Activated T-helper 1 cell treated with anti-CD3 and anti-CD28 coated beads, Interleukin-12 subunit alpha, Interleukin-12 subunit beta, Interleukin-2, Interleukin-4 antibody, amounts not matched to agents 30 ng/mL and 10 ng/mL and 1 ng/mL, durations not matched to agents 14 hours and 24 hours and 36 hours (primary cell): ENCODE measurements at regions of chr9 and their contacts with region 1.

Region 1: GRCh38 chr9:131692612-131693562 is 47.0 kb downstream of the RAPGEF1 start:
- DNase-seq: no peak
- H3K4me3 Mint-ChIP-seq: no peak overlapping the region
- H3K27ac Mint-ChIP-seq: no peak overlapping the region
- H3K4me1 Mint-ChIP-seq: peaks cover 82% of the 10 kb centered on the region
- H3K27me3 Mint-ChIP-seq: no peaks in the 10 kb centered on the region

Region 2: GRCh38 chr9:131704141-131704983 is 11.5 kb after region 1 on chr9:
- intact Hi-C with region 1: loop called (anchors 2 kb)
- DNase-seq: no peak
- H3K4me3 Mint-ChIP-seq: peak overlapping the region; percentile 65
- H3K27ac Mint-ChIP-seq: peak overlapping the region; percentile 91
- H3K4me1 Mint-ChIP-seq: peaks cover 89% of the 10 kb centered on the region
- H3K27me3 Mint-ChIP-seq: no peaks in the 10 kb centered on the region

Region 3: DNA sequence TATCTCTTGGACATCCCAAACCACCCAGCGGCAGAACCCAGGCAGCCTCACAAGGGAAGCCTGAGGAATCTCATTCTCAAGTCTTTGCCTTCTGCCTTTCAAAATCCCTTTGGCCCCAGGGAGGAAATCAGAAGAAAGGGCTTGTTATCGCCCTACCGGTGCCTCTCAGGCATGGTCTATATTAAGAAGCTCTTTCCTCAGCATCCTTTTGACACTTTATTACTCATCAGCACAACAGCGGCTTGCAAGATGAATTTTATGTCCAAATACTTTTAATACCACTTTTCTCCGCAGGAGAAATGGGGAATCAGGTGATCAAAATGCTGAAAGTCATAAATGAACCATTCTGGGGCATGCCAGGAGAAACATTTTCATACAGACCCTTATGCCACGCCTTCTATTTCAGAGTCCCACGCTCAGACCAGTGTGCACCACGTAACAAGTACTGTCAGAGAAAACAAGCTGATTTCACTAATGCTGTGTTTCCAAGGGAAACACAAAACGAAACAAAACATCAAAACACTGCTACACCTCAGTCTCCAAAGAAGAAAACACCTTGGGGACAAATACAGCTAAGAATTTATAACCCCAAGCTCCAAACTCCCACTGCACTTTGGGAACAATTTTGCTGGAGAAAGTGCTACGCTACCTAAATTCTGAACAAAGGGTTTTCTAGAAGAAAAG is 17.0 kb after region 1 on chr9:
- intact Hi-C with region 1: loop called (anchors 2 kb)
- DNase-seq: peak; percentile 44
- H3K4me3 Mint-ChIP-seq: peak overlapping the region; percentile 69
- H3K27ac Mint-ChIP-seq: peak overlapping the region; percentile 97
- H3K4me1 Mint-ChIP-seq: peaks cover 76% of the 10 kb centered on the region
- H3K27me3 Mint-ChIP-seq: no peaks in the 10 kb centered on the region

Region 4: DNA sequence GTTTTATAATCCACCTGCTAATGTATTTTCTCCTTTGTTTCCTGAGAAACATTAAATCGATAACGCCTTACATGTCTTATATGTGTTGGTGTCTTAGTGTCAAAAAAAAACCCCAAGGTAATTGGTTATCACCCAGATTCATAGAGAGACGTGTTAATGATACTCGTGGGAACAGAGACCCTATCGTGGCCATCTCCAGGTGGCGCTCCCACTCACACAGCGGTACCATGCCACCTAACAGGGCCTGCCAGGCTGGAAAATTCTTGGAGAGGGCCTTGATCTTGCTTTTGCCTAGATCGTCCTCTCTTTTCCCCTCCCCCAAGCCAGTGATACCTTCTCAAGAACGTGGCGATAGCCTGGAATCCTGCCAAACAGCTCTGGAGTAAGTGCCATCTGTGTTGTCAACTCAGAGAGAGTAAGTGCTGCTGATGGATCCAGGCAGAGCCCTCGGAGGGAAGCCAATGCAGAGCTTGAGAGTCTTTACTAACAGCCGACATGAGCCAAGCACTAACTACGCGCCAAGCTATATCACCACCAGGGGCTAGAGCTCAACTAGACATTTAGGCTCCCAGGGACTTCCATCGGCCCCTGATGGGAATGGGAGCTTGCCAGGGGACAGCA is 29.2 kb after region 1 on chr9:
- intact Hi-C with region 1: no loop called
- DNase-seq: no peak
- H3K4me3 Mint-ChIP-seq: no peak overlapping the region
- H3K27ac Mint-ChIP-seq: peak overlapping the region; percentile 7
- H3K4me1 Mint-ChIP-seq: peaks cover 86% of the 10 kb centered on the region
- H3K27me3 Mint-ChIP-seq: no peaks in the 10 kb centered on the region

Region 5: DNA sequence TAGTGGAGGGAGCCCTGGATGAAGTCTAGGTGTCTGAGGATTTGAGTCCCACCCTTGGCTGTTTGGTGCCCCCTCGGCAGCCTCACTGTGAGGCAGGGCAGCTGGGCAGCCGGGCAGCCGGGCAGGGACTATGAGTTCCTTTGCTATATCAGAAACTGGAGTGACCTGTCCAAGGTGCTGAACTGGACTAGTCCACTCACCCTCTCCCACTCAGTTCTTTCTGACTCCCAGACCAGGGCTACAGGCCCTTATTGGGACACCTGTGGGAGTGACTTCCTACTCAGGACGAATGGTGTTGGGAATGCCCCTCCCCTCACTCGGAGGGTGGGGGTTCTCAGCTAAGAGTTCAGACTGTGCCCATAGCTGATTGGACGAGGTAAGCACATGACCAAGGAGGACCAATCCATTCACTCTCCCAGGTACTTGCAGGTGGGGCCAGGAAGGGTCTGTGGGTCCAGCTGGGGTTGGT is 81.1 kb after region 1 on chr9:
- intact Hi-C with region 1: no loop called
- DNase-seq: peak; percentile 7
- H3K4me3 Mint-ChIP-seq: no peak overlapping the region
- H3K27ac Mint-ChIP-seq: no peak overlapping the region
- H3K4me1 Mint-ChIP-seq: no peaks in the 10 kb centered on the region
- H3K27me3 Mint-ChIP-seq: peaks cover 16% of the 10 kb centered on the region